ENCODE measurements at regions of chr14 and their contacts with region 1.

Region 1: GRCh38 chr14:75307700-75308379 is 29.2 kb downstream of the FOS start:
- DNase-seq: peak; percentile 75 to 93
- ATAC-seq: peak; percentile 75

Region 2: GRCh38 chr14:75126679-75127473 is 181.0 kb before region 1 on chr14 and contains the start of gene NEK9:
- intact Hi-C with region 1: loop called (anchors 5 kb)
- DNase-seq: peak; percentile 88 to 91
- ATAC-seq: peak; percentile 85
- total RNA-seq, gene NEK9: 44.8 to 47.6 TPM

Region 3: GRCh38 chr14:75132382-75133086 is 175.3 kb before region 1 on chr14:
- intact Hi-C with region 1: loop called (anchors 5 kb)
- DNase-seq: no peak
- ATAC-seq: peak; percentile 63

Region 4: GRCh38 chr14:75487155-75487671 is 179.4 kb after region 1 on chr14:
- intact Hi-C with region 1: loop called (anchors 2 to 5 kb)
- DNase-seq: no peak
- ATAC-seq: no peak

Measured in left colon (tissue), 2 donors.